ENCODE measurements at regions of chr21 and their contacts with region 1.

Region 1: DNA sequence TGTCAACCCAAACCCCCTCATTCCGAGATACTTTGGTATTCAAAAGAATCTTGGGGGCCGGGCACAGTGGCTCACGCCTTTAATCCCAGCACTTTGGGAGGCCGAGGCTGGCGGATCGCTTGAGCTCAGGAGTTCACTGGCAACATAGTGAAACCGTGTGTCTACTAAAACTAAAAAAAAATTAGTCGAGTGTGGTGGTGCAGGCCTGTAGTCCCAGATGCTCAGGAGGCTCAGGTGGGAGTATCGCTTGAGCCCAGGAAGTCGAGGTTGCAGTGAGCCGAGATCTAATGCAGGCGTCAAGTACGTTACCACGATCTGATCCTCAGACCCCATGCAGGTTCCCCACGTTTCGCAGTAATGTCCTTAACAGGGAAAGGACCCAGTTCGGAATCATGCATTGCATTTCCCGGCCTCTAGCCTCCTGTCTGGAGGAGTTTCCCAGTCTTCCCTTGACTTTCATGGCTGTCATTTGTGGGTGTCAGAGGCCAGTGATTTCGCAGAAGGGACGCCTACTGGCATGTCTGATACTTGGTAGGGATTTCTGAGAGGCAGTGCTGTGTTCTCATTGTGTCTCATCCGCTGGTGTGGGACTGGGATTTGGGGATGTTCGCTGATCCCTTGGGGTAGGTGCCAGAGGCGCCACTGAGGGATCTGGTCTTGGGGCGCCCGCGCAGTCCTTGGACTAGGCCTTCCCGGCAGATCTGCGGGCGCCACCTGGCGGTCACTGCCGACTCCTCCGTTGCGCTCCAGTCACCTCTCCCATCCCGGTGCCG is 39.3 kb upstream of the HMGN1 start:
- DNase-seq: peak; percentile 80 to 95 (median 86)
- ATAC-seq: peak; percentile 78
- H3K4me3 ChIP-seq: peak overlapping the region; percentile 63
- H3K4me3 Mint-ChIP-seq: peak overlapping the region; percentile 90
- H3K27ac ChIP-seq: peak overlapping the region in 1 of 2 donors; percentile 35
- H3K27ac Mint-ChIP-seq: peak overlapping the region; percentile 85
- H3K4me1 ChIP-seq: peaks cover 30% of the 10 kb centered on the region
- H3K4me1 Mint-ChIP-seq: peaks cover 36% of the 10 kb centered on the region
- H3K27me3 ChIP-seq: no peaks in the 10 kb centered on the region
- H3K27me3 Mint-ChIP-seq: no peaks in the 10 kb centered on the region
- CTCF ChIP-seq: peak; percentile 96

Region 2: DNA sequence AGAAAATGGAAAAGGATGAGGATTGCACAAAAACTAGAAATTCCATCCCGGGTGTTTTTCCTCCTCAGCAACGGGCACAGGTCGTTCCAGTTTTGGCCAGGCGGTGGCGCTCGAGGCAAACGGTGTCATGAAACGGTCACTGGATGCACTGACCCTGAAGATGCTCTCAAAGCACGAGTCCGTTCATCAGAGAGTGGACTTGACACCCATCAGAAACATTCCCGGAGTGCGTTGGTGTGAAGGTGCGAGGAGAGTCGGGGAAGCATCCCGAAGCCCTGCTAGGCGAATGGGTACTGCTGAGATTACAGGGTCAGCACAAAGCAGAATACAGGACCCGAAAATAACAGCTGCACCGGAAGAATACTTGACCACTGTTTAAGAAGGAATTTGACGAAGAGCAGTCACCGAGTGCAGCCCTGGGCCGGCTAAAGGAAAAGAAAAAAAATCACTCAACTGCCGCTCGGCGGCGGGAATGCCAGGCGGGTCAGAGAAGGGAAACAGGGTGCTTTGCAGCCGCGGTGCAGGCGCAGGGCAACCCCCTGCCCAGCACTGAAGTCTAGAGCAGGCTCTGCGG is 654.2 kb before region 1 on chr21:
- CTCF ChIA-PET with region 1: no interaction called
- POLR2A ChIA-PET with region 1: no interaction called
- intact Hi-C with region 1: loop called (anchors 5 to 10 kb)
- DNase-seq: peak; percentile 39 to 84 (median 72)
- ATAC-seq: peak; percentile 51
- H3K4me3 ChIP-seq: peak overlapping the region; percentile 53
- H3K4me3 Mint-ChIP-seq: peak overlapping the region; percentile 46
- H3K27ac ChIP-seq: no peak overlapping the region
- H3K27ac Mint-ChIP-seq: no peak overlapping the region
- H3K4me1 ChIP-seq: peaks cover 7% of the 10 kb centered on the region
- H3K4me1 Mint-ChIP-seq: peaks cover 9% of the 10 kb centered on the region
- H3K27me3 ChIP-seq: peaks cover 10 to 13% of the 10 kb centered on the region in 2 experiments
- H3K27me3 Mint-ChIP-seq: peaks cover 36% of the 10 kb centered on the region
- CTCF ChIP-seq: peak; percentile 98

Region 3: GRCh38 chr21:39183237-39184007 is 204.8 kb before region 1 on chr21 and contains the start of gene PSMG1:
- CTCF ChIA-PET with region 1: no interaction called
- POLR2A ChIA-PET with region 1: interaction called, 10 read pairs
- intact Hi-C with region 1: loop called (anchors 5 kb)
- DNase-seq: peak; percentile 86 to 97 (median 92)
- ATAC-seq: peak; percentile 92
- H3K4me3 ChIP-seq: peak within 1 kb of the TSS; percentile 87
- H3K4me3 Mint-ChIP-seq: peak within 1 kb of the TSS; percentile 91
- H3K27ac ChIP-seq: peak within 1 kb of the TSS; percentile 81 to 92
- H3K27ac Mint-ChIP-seq: peak within 1 kb of the TSS; percentile 91
- H3K4me1 ChIP-seq: peaks cover 18% of the 10 kb centered on the region
- H3K4me1 Mint-ChIP-seq: peaks cover 76% of the 10 kb centered on the region
- H3K27me3 ChIP-seq: no peaks in the 10 kb centered on the region
- H3K27me3 Mint-ChIP-seq: no peaks in the 10 kb centered on the region
- CTCF ChIP-seq: no peak
- total RNA-seq, gene PSMG1: 7.8 to 7.9 TPM

Region 4: GRCh38 chr21:39326607-39327307 is 61.5 kb before region 1 on chr21:
- CTCF ChIA-PET with region 1: no interaction called
- POLR2A ChIA-PET with region 1: no interaction called
- intact Hi-C with region 1: no loop called
- DNase-seq: no peak
- ATAC-seq: no peak
- H3K4me3 ChIP-seq: no peak overlapping the region
- H3K4me3 Mint-ChIP-seq: no peak overlapping the region
- H3K27ac ChIP-seq: no peak overlapping the region
- H3K27ac Mint-ChIP-seq: no peak overlapping the region
- H3K4me1 ChIP-seq: no peaks in the 10 kb centered on the region
- H3K4me1 Mint-ChIP-seq: no peaks in the 10 kb centered on the region
- H3K27me3 ChIP-seq: no peaks in the 10 kb centered on the region
- H3K27me3 Mint-ChIP-seq: no peaks in the 10 kb centered on the region
- CTCF ChIP-seq: no peak

Region 5: DNA sequence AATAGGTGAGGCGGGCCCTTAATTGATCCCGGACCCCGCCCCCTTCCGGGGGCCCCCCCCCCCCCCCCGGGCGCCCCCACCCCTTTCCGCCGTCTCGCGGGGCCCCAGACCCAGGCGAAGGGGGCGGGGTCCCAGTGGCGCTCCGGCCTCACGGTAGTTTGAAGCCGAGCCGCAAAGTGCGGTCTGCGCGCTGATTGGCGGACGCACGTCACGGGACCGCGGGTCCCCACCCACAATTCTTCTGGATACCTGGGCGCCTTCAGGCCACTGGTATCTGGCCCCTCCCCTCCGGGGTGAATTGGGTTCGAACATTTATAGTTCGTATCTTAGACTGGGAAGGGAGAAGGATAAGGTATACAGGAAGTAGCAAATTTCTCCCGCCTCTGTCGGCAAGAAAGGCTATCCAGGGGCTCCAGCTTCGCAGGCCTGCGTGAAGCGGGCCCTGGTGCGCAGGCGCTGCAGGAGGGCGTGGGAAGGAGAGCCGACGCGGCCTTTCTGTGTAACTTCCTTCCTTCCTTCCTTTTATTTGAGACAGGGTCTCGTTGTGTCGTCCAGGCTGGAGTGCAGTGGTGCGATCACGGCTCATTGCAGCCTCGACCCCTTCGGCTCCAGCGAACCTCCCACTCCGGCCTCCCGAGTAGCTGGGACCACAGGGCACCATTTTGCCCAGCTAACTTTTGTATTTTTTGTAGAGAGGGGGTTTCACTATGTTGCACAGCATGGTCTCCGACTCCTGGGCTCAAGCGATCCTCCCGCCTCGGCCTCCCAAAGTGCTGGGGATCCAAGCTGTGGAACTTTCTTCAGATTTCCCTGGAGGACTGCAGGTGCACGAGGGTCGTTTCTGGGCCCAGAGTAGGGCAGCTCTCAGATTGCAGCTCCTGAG is 38.8 kb before region 1 on chr21:
- CTCF ChIA-PET with region 1: interaction called, 6 read pairs
- POLR2A ChIA-PET with region 1: interaction called, 65 read pairs
- intact Hi-C with region 1: loop called (anchors 2 kb)
- DNase-seq: peak; percentile 94 to 98 (median 96)
- ATAC-seq: peak; percentile 83
- H3K4me3 ChIP-seq: peak overlapping the region; percentile 79
- H3K4me3 Mint-ChIP-seq: peak overlapping the region; percentile 96
- H3K27ac ChIP-seq: peak overlapping the region; percentile 90
- H3K27ac Mint-ChIP-seq: peak overlapping the region; percentile 99
- H3K4me1 ChIP-seq: peaks cover 25% of the 10 kb centered on the region
- H3K4me1 Mint-ChIP-seq: peaks cover 43% of the 10 kb centered on the region
- H3K27me3 ChIP-seq: no peaks in the 10 kb centered on the region
- H3K27me3 Mint-ChIP-seq: no peaks in the 10 kb centered on the region
- CTCF ChIP-seq: no peak

Region 6: GRCh38 chr21:39445321-39446269 is 57.4 kb after region 1 on chr21 and contains the start of gene LCA5L:
- CTCF ChIA-PET with region 1: no interaction called
- POLR2A ChIA-PET with region 1: interaction called, 3 read pairs
- intact Hi-C with region 1: loop called in 1 of 2 experiments (anchors 1 kb)
- DNase-seq: peak; percentile 76 to 96 (median 86)
- ATAC-seq: peak; percentile 93
- H3K4me3 ChIP-seq: peak within 1 kb of the TSS; percentile 71
- H3K4me3 Mint-ChIP-seq: peak within 1 kb of the TSS; percentile 92
- H3K27ac ChIP-seq: peak within 1 kb of the TSS; percentile 68 to 74
- H3K27ac Mint-ChIP-seq: peak within 1 kb of the TSS; percentile 91
- H3K4me1 ChIP-seq: peaks cover 11% of the 10 kb centered on the region
- H3K4me1 Mint-ChIP-seq: peaks cover 15% of the 10 kb centered on the region
- H3K27me3 ChIP-seq: no peaks in the 10 kb centered on the region
- H3K27me3 Mint-ChIP-seq: peaks cover 16% of the 10 kb centered on the region
- CTCF ChIP-seq: no peak
- total RNA-seq, gene LCA5L: 0.17 TPM in 1 of 2 experiments, not detected in the other